ENCODE measurements at regions of chr17 and their contacts with region 1.

Region 1: GRCh38 chr17:68184816-68185436 is 62.9 kb upstream of the AMZ2 start:
- DNase-seq: peak; percentile 65
- H3K4me3 ChIP-seq: peak overlapping the region; percentile 75
- H3K27ac ChIP-seq: peak overlapping the region; percentile 90
- H3K4me1 ChIP-seq: peaks cover 33% of the 10 kb centered on the region
- CTCF ChIP-seq: no peak

Region 2: GRCh38 chr17:68172461-68172954 is 12.4 kb before region 1 on chr17:
- CTCF ChIA-PET with region 1: interaction called, 4 read pairs
- POLR2A ChIA-PET with region 1: interaction called, 12 read pairs
- intact Hi-C with region 1: no loop called
- DNase-seq: peak; percentile 85
- H3K4me3 ChIP-seq: no peak overlapping the region
- H3K27ac ChIP-seq: no peak overlapping the region
- H3K4me1 ChIP-seq: peaks cover 20% of the 10 kb centered on the region
- CTCF ChIP-seq: peak; percentile 100

Region 3: GRCh38 chr17:68205251-68205807 is 20.4 kb after region 1 on chr17:
- CTCF ChIA-PET with region 1: interaction called, 7 read pairs
- POLR2A ChIA-PET with region 1: interaction called, 72 read pairs
- intact Hi-C with region 1: loop called (anchors 1 kb)
- DNase-seq: peak; percentile 97
- H3K4me3 ChIP-seq: peak overlapping the region; percentile 77
- H3K27ac ChIP-seq: peak overlapping the region; percentile 84
- H3K4me1 ChIP-seq: peaks cover 55% of the 10 kb centered on the region
- CTCF ChIP-seq: peak; percentile 89

Region 4: DNA sequence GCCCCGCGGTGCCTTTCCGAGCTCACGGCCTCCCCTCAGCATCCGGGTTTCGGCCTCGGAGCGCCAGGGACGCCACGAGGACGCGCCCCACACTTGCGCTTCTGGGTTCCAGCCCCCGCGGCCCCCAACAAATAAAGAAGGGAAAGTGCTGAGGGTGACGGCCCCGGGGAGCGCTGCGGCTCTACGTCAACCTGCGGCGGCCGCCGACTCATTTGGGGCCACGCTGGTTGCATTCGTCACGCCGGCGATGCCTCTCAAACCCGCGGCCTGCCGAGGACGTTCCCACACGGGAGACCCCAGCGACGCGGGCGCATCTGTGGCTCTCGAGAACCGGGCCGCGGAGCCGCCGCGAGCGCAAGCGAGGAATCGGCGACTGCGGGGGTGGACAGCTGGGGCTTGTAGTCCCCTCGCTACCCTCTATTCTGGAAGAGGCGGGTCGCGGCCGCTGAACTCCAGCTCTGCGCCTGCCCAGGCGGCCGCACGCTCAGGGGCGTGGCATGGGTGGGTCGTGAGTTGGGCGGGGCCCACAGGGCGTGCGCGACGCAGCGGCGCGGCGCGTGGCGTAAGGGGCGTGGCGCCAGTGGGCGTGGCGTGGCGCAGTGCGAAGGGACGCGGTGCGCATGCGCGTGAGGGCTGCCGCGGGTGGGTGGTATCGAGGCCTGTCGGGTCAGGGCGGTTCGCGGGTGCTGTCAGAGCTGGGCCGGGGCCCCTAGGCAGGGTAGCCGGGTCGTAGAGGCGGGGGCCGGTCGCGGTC is 62.7 kb after region 1 on chr17 and contains the start of gene AMZ2:
- CTCF ChIA-PET with region 1: interaction called, 3 read pairs
- POLR2A ChIA-PET with region 1: interaction called, 59 read pairs
- intact Hi-C with region 1: loop called (anchors 2 kb)
- DNase-seq: peak; percentile 97
- H3K4me3 ChIP-seq: peak within 1 kb of the TSS; percentile 80
- H3K27ac ChIP-seq: peak within 1 kb of the TSS; percentile 90
- H3K4me1 ChIP-seq: peaks cover 86% of the 10 kb centered on the region
- CTCF ChIP-seq: no peak
- total RNA-seq, gene AMZ2: 105 and 117 TPM in 2 replicates

Region 5: GRCh38 chr17:68291844-68292695 is 107.1 kb after region 1 on chr17:
- CTCF ChIA-PET with region 1: interaction called, 4 read pairs
- POLR2A ChIA-PET with region 1: interaction called, 33 read pairs
- intact Hi-C with region 1: loop called (anchors 2 kb)
- DNase-seq: peak; percentile 96
- H3K4me3 ChIP-seq: peak overlapping the region; percentile 85
- H3K27ac ChIP-seq: peak overlapping the region; percentile 94
- H3K4me1 ChIP-seq: peaks cover 51% of the 10 kb centered on the region
- CTCF ChIP-seq: peak; percentile 75

Region 6: DNA sequence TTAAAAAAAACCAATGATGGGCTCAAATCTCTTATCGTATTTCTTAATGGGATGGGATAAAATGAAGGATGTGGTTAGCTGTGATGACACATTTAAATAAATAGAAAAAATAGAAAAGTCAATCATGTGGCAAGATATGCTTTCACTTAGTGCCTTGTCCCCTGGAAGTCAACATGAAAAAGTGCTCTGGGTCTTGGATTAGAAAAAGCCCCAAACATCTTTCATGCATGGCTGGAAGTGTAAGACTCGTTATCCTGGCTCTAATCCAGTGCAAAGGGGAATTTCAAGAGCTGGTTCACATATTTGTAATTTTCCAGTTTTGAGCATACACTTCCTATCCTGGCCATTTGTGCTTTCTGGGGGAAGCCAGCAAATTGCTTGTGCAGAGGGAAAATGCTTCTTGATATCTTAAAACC is 1390.4 kb after region 1 on chr17:
- CTCF ChIA-PET with region 1: no interaction called
- POLR2A ChIA-PET with region 1: no interaction called
- intact Hi-C with region 1: loop called (anchors 5 kb)
- DNase-seq: peak; percentile 59
- H3K4me3 ChIP-seq: peak overlapping the region; percentile 7
- H3K27ac ChIP-seq: peak overlapping the region; percentile 94
- H3K4me1 ChIP-seq: peaks cover 94% of the 10 kb centered on the region
- CTCF ChIP-seq: no peak

Measured in OCI-LY7 (cell line).